GM10248 (cell line): ENCODE measurements at regions of chr1 and their contacts with region 1.

Region 1: DNA sequence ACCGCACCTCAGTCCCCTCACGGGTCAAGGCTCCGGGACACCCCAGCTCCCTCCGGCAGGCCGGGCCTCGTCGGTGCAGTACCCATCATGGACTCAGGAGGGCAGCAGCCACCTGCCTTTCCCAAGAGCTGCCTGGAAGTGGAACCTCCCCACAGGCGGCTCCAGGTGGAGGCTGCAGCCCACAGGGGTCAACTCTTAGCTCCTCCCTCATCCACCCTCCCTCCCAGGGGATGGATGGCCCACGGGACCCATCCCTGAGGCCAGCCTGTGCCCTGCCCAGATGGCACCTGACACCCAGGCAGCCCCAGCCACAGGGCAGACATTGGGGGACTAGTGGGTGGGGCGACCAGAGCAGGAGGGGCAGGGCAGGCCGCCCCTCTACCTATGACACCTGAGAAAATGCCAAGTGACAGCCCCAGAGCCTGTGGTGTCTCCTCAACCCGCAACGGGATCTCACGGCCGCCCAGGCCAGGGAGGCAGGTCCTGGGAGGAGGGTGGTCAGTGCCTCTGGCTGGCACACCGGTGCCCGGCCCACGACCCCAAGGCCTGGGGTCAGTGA is 1.2 kb upstream of the ARHGEF16 start:
- DNase-seq: peak; percentile 90
- CTCF ChIP-seq: peak; percentile 92

Region 2: DNA sequence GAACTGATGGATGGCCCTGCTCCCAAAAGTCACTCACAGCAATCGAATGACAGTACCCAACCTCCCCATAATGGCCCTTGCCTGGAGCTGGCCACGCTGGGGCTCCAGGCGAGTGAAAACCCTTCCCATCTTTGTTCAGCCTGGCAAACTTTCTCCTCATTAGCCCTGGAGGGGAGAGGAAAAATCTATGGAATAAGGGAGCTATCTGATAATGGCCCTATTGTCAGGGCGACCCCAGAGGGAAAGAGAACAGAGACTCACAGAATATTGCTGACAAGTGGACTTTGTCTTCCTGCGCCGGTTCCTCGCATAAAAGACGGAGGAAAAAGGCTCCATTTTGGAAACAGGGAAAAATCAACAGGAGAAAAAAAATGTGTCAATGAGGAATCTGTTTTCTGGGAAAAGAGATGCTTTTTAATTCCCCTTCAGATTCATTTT is 11.9 kb before region 1 on chr1:
- CTCF ChIA-PET with region 1: interaction called, 10 read pairs
- POLR2A ChIA-PET with region 1: no interaction called
- DNase-seq: no peak
- CTCF ChIP-seq: no peak

Region 3: GRCh38 chr1:3477241-3477995 is 24.1 kb after region 1 on chr1:
- CTCF ChIA-PET with region 1: interaction called, 14 read pairs
- POLR2A ChIA-PET with region 1: no interaction called
- DNase-seq: peak; percentile 66
- CTCF ChIP-seq: no peak

Region 4: GRCh38 chr1:3483801-3484444 is 30.6 kb after region 1 on chr1:
- CTCF ChIA-PET with region 1: interaction called, 22 read pairs
- POLR2A ChIA-PET with region 1: no interaction called
- DNase-seq: peak; percentile 80
- CTCF ChIP-seq: peak; percentile 76

Region 5: GRCh38 chr1:3491291-3492246 is 38.3 kb after region 1 on chr1:
- CTCF ChIA-PET with region 1: interaction called, 22 read pairs
- POLR2A ChIA-PET with region 1: no interaction called
- DNase-seq: peak; percentile 92
- CTCF ChIP-seq: peak; percentile 92

Region 6: GRCh38 chr1:3695326-3696217 is 242.3 kb after region 1 on chr1:
- CTCF ChIA-PET with region 1: no interaction called
- POLR2A ChIA-PET with region 1: no interaction called
- DNase-seq: peak; percentile 79
- CTCF ChIP-seq: peak; percentile 84